Ascending aorta (tissue), 2 donors: ENCODE measurements at regions of chr9 and their contacts with region 1.

Region 1: GRCh38 chr9:88534456-88535261 is at the start of gene NXNL2:
- DNase-seq: peak in 1 of 2 donors; percentile 88
- H3K4me3 ChIP-seq: peak within 1 kb of the TSS; percentile 59 to 94
- H3K27ac ChIP-seq: peak within 1 kb of the TSS; percentile 93
- H3K4me1 ChIP-seq: peaks cover 6 to 12% of the 10 kb centered on the region in 2 donors
- H3K27me3 ChIP-seq: no peaks in the 10 kb centered on the region
- CTCF ChIP-seq: no peak
- total RNA-seq, gene NXNL2: not detected

Region 2: DNA sequence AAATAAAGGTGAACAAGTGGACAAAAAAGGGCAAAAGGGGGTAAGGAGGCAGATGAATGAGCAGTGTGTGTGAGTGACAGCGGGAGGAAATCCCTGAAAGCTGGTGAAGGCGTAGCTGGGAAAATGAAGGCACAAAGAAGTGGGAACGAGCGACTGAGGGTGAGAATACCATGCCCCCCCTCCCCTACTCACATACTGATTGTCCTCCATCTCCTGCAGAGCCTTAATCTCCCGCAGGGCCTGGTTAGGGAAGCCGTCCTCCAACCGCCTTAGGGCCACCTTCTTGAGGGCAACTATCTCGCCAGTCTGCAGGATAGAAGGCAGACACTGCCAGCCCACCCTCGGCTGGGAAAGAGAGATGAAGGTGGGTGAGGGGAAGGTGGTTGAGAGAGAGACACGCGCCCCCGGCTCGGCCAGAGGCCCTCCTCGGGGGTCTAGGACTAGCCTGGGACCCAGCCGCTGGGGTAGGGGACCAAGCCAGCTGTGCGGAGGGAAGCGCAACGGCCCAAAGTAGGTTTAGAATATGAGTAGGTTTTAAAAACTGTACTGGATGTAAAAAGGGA is 560.8 kb before region 1 on chr9:
- intact Hi-C with region 1: loop called (anchors 5 kb)
- DNase-seq: no peak
- H3K4me3 ChIP-seq: peak overlapping the region; percentile 72 to 75
- H3K27ac ChIP-seq: peak overlapping the region in 1 of 2 donors; percentile 6
- H3K4me1 ChIP-seq: peaks cover 0 to 18% of the 10 kb centered on the region in 2 donors
- H3K27me3 ChIP-seq: no peaks in the 10 kb centered on the region
- CTCF ChIP-seq: no peak

Region 3: GRCh38 chr9:88197781-88198340 is 336.8 kb before region 1 on chr9:
- intact Hi-C with region 1: loop called (anchors 5 kb)
- DNase-seq: no peak
- H3K4me3 ChIP-seq: peak overlapping the region; percentile 26 to 53
- H3K27ac ChIP-seq: peak overlapping the region in 1 of 2 donors; percentile 45
- H3K4me1 ChIP-seq: peaks cover 0 to 6% of the 10 kb centered on the region in 2 donors
- H3K27me3 ChIP-seq: no peaks in the 10 kb centered on the region
- CTCF ChIP-seq: no peak

Region 4: DNA sequence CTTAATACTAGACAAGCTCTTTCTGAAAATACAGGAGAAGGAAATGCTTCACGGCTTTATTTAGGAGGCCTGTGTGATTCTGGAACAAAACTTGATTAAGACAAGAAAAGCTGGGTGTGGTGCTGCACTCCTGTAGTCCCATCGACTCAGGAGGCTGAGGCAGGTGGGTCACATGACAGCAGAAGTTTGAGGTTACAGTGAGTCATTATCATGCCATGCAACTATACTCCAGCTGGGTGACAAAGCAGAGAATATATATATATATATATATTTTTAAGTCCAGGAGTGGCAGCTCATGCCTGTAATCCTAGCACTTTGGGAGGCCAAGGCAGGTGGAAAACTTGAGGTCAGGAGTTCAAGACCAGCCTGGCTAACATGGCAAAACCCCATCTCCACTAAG is 179.5 kb before region 1 on chr9:
- intact Hi-C with region 1: no loop called
- DNase-seq: no peak
- H3K4me3 ChIP-seq: no peak overlapping the region
- H3K27ac ChIP-seq: no peak overlapping the region
- H3K4me1 ChIP-seq: no peaks in the 10 kb centered on the region
- H3K27me3 ChIP-seq: no peaks in the 10 kb centered on the region
- CTCF ChIP-seq: no peak

Region 5: GRCh38 chr9:88370292-88370691 is 164.4 kb before region 1 on chr9:
- intact Hi-C with region 1: no loop called
- DNase-seq: no peak
- H3K4me3 ChIP-seq: no peak overlapping the region
- H3K27ac ChIP-seq: no peak overlapping the region
- H3K4me1 ChIP-seq: no peaks in the 10 kb centered on the region
- H3K27me3 ChIP-seq: no peaks in the 10 kb centered on the region
- CTCF ChIP-seq: no peak

Region 6: GRCh38 chr9:88605512-88606362 is 71.1 kb after region 1 on chr9:
- intact Hi-C with region 1: loop called (anchors 2 kb)
- DNase-seq: no peak
- H3K4me3 ChIP-seq: peak overlapping the region in 1 of 2 donors; percentile 0
- H3K27ac ChIP-seq: peak overlapping the region; percentile 74 to 81
- H3K4me1 ChIP-seq: peaks cover 0 to 21% of the 10 kb centered on the region in 2 donors
- H3K27me3 ChIP-seq: no peaks in the 10 kb centered on the region
- CTCF ChIP-seq: no peak

Region 7: GRCh38 chr9:89000973-89001916 is 466.6 kb after region 1 on chr9:
- intact Hi-C with region 1: loop called (anchors 2 kb)
- DNase-seq: peak; percentile 46 to 94
- H3K4me3 ChIP-seq: peak overlapping the region; percentile 33 to 39
- H3K27ac ChIP-seq: peak overlapping the region; percentile 72 to 75
- H3K4me1 ChIP-seq: peaks cover 18 to 44% of the 10 kb centered on the region in 2 donors
- H3K27me3 ChIP-seq: no peaks in the 10 kb centered on the region
- CTCF ChIP-seq: peak; percentile 76 to 87 (median 76)

Region 8: GRCh38 chr9:89310475-89311346 is 776.1 kb after region 1 on chr9 and contains the start of gene CKS2:
- intact Hi-C with region 1: loop called (anchors 2 kb)
- DNase-seq: peak; percentile 99 to 100
- H3K4me3 ChIP-seq: peak within 1 kb of the TSS; percentile 91
- H3K27ac ChIP-seq: peak within 1 kb of the TSS; percentile 100
- H3K4me1 ChIP-seq: peaks cover 3 to 11% of the 10 kb centered on the region in 2 donors
- H3K27me3 ChIP-seq: no peaks in the 10 kb centered on the region
- CTCF ChIP-seq: no peak
- total RNA-seq, gene CKS2: not detected

Region 9: GRCh38 chr9:89318123-89319014 is 783.7 kb after region 1 on chr9 and contains the start of gene SECISBP2:
- intact Hi-C with region 1: loop called (anchors 2 kb)
- DNase-seq: peak; percentile 89 to 98
- H3K4me3 ChIP-seq: peak within 1 kb of the TSS; percentile 74 to 89
- H3K27ac ChIP-seq: peak within 1 kb of the TSS; percentile 98 to 100
- H3K4me1 ChIP-seq: peaks cover 10 to 27% of the 10 kb centered on the region in 2 donors
- H3K27me3 ChIP-seq: no peaks in the 10 kb centered on the region
- CTCF ChIP-seq: peak in 2 of 3 experiments; percentile 60 to 69
- total RNA-seq, gene SECISBP2: 27.8 TPM